Activated naive CD4-positive, alpha-beta T cell treated with anti-CD3 and anti-CD28 coated beads for 36 hours (primary cell): ENCODE measurements at regions of chr10 and their contacts with region 1.

Region 1: DNA sequence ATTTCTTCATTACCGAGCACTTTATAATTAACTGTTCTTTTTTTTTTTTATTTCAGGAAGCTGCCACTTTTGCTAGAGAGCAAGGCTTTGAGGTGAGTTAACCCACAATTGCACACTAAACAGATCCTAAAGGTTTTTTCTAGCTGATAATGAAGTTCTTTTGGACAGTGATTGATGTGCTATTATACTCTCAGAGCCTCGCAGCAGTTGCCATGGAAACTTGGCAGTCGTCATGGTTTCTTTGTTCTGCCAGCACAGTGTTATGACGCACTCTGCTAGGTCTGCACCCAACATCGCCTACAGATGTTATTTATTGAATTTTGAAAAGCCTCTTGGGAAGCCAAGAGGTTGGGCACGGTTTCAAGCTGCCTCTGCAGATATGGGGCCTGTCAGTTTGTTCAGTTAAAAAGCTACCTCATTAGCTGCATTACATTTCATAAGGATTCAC is 237.2 kb upstream of the KAT6B start:
- DNase-seq: peak; percentile 95
- H3K4me3 Mint-ChIP-seq: peak overlapping the region; percentile 27
- H3K27ac Mint-ChIP-seq: peak overlapping the region; percentile 68
- H3K4me1 Mint-ChIP-seq: peaks cover 47% of the 10 kb centered on the region
- H3K27me3 Mint-ChIP-seq: no peaks in the 10 kb centered on the region

Region 2: DNA sequence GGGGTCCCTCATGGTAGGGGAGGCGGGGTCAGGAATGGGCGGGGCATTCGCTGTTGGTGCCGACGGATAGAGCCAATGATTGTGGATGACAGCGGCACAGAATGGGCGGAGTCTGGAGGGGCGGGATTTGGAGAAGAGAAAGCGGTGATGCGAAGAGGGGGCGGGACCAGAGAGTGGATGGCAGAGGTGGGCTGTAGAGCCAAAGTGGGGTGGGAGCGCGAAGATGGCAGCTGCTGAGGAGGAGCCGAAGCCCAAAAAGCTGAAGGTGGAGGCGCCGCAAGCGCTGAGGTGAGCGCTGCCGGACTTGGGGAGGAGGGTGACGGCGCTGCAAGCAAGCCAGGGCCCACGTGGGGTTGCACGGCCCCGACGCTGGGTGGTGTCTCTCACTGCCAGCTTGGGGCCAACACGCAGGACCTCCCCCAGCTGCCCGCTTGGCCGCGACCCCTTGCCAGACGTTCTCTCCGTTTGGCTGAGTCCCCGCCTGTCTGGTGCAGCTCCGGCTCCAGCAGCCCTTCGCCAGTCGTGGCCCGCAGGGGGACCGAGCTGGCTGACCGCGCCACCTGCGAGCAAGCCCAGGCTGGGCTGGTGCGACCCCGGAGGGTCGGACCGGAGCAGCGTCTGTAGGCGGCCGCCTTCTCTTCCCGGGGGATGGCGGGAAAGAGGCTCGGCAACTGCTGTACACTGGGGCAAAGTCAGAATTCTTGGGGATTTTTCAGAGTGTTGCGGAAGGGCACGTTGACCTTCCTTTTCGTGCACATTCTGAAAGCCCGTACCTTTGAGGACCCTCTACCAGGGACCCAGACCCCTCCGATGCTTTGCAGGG is 438.0 kb before region 1 on chr10 and contains the start of gene ADK:
- CTCF ChIA-PET with region 1: no interaction called
- intact Hi-C with region 1: loop called (anchors 1 kb)
- DNase-seq: peak; percentile 100
- H3K4me3 Mint-ChIP-seq: no peak within 1 kb of the TSS
- H3K27ac Mint-ChIP-seq: peak within 1 kb of the TSS; percentile 33
- H3K4me1 Mint-ChIP-seq: peaks cover 31% of the 10 kb centered on the region
- H3K27me3 Mint-ChIP-seq: no peaks in the 10 kb centered on the region
- total RNA-seq, gene ADK: 43.4 to 43.9 TPM

Region 3: DNA sequence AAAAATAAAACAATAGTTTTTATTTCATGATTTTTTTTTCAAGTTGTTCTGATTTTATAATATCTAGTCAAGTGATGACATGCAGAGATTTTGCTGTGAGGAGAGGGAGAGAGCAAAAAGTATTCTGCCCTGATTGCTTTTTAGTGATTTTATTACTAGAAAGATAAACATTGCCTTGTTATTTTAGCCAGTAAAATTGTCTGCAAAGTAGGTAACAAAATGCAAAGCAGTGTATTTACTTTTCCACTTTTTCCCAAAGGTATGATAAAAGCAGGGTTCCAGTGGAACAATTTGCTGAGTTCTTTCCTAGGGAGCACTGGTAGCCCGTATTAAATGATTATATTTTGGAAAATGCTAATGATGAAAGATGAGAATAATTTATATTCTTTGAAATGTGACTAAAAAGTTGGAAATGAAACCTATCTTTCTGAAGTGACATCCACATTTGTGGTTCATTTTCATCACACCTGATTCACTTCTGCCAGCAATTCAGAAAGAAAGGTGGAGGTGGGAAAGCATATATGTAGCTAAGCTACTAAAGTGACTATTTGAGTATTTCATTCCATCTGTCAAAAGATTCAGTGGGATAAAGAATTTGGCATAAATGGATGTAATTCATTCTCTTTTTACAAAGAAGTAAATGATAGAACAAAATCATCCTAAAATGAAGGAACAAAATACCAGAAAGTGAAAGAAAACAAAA is 138.0 kb before region 1 on chr10:
- CTCF ChIA-PET with region 1: no interaction called
- intact Hi-C with region 1: loop called (anchors 2 kb)
- DNase-seq: peak; percentile 6
- H3K4me3 Mint-ChIP-seq: no peak overlapping the region
- H3K27ac Mint-ChIP-seq: no peak overlapping the region
- H3K4me1 Mint-ChIP-seq: peaks cover 18% of the 10 kb centered on the region
- H3K27me3 Mint-ChIP-seq: no peaks in the 10 kb centered on the region

Region 4: GRCh38 chr10:74854610-74855009 is 265.4 kb after region 1 on chr10:
- CTCF ChIA-PET with region 1: no interaction called
- intact Hi-C with region 1: loop called (anchors 1 kb)
- DNase-seq: no peak
- H3K4me3 Mint-ChIP-seq: peak overlapping the region; percentile 25
- H3K27ac Mint-ChIP-seq: peak overlapping the region; percentile 38
- H3K4me1 Mint-ChIP-seq: peaks cover 40% of the 10 kb centered on the region
- H3K27me3 Mint-ChIP-seq: no peaks in the 10 kb centered on the region

Region 5: GRCh38 chr10:75019370-75019769 is 430.1 kb after region 1 on chr10:
- CTCF ChIA-PET with region 1: interaction called, 6 read pairs
- intact Hi-C with region 1: loop called (anchors 2 kb)
- DNase-seq: no peak
- H3K4me3 Mint-ChIP-seq: no peak overlapping the region
- H3K27ac Mint-ChIP-seq: no peak overlapping the region
- H3K4me1 Mint-ChIP-seq: peaks cover 12% of the 10 kb centered on the region
- H3K27me3 Mint-ChIP-seq: no peaks in the 10 kb centered on the region

Region 6: GRCh38 chr10:75210282-75211006 is 621.2 kb after region 1 on chr10 and contains the start of gene VDAC2:
- CTCF ChIA-PET with region 1: no interaction called
- intact Hi-C with region 1: loop called (anchors 2 kb)
- DNase-seq: peak; percentile 92
- H3K4me3 Mint-ChIP-seq: peak within 1 kb of the TSS; percentile 100
- H3K27ac Mint-ChIP-seq: peak within 1 kb of the TSS; percentile 99
- H3K4me1 Mint-ChIP-seq: peaks cover 42% of the 10 kb centered on the region
- H3K27me3 Mint-ChIP-seq: no peaks in the 10 kb centered on the region
- total RNA-seq, gene VDAC2: 193 TPM